B cell (primary cell): ENCODE measurements at regions of chr6 and their contacts with region 1.

Region 1: GRCh38 chr6:27753668-27754407 is 158.4 kb downstream of the OR2B2 start:
- DNase-seq: peak; percentile 82
- ATAC-seq: peak; percentile 48
- H3K4me3 ChIP-seq: peak overlapping the region; percentile 42 to 73 (median 63)
- H3K4me3 Mint-ChIP-seq: peak overlapping the region; percentile 91
- H3K27ac ChIP-seq: no peak overlapping the region
- H3K27ac Mint-ChIP-seq: peak overlapping the region; percentile 91
- H3K4me1 ChIP-seq: peaks cover 22 to 25% of the 10 kb centered on the region in 2 donors
- H3K4me1 Mint-ChIP-seq: peaks cover 30% of the 10 kb centered on the region
- H3K27me3 ChIP-seq: peaks cover 0 to 26% (median 5%) of the 10 kb centered on the region in 4 experiments
- H3K27me3 Mint-ChIP-seq: peaks cover 6% of the 10 kb centered on the region
- CTCF ChIP-seq: no peak

Region 2: GRCh38 chr6:27312146-27312949 is 441.5 kb before region 1 on chr6 and contains the start of gene POM121L2:
- CTCF ChIA-PET with region 1: interaction called, 4 read pairs
- POLR2A ChIA-PET with region 1: no interaction called
- intact Hi-C with region 1: loop called (anchors 2 kb)
- DNase-seq: peak; percentile 82
- ATAC-seq: peak; percentile 60
- H3K4me3 ChIP-seq: peak within 1 kb of the TSS; percentile 5 to 69 (median 62)
- H3K4me3 Mint-ChIP-seq: peak within 1 kb of the TSS; percentile 88
- H3K27ac ChIP-seq: no peak within 1 kb of the TSS
- H3K27ac Mint-ChIP-seq: no peak within 1 kb of the TSS
- H3K4me1 ChIP-seq: peaks cover 12 to 13% of the 10 kb centered on the region in 2 donors
- H3K4me1 Mint-ChIP-seq: peaks cover 13% of the 10 kb centered on the region
- H3K27me3 ChIP-seq: peaks cover 0 to 56% (median 38%) of the 10 kb centered on the region in 4 experiments
- H3K27me3 Mint-ChIP-seq: peaks cover 70% of the 10 kb centered on the region
- CTCF ChIP-seq: peak; percentile 82
- total RNA-seq, gene POM121L2: not detected in 2 replicates

Region 3: DNA sequence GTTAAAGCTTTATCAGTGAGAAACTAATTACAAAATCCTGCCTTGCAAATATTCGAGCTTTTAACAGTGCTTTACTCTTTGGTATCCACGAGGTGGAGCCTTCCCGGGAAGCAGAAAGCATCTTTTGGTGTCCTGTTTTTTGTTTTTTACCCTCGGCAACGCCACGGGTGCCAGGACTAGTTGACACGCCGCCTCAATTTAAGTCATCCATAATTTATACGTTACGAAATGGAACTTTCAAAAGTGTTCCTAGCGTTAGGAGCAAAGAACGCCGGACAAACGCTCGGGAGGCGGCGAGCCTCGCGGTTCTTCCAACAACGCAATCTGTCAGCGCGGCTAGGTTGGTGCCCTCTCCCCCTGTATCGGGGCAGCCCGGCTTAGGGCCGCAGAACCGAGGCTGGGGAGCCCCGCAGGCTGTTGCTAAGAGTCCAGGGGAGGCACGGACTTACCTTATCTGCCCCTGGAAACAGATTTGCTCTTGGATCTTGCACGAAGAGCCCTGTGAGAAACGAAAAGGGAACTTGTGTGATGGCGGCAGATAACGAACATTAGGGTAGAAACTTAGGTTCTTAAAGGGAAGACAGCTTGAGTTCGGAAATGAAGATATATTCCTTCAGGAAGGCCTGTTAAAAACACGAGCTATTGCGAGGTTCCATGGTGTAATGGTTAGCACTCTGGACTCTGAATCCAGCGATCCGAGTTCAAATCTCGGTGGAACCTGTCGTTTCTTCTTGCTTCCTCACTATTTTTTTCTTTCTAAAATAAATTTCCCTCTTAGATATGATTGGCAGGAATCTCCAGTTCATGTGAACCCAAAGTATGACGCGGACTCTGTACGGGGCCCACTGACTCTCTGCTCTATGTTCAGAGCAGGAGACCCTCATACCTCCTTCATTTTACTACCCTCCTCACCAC is 234.7 kb before region 1 on chr6:
- CTCF ChIA-PET with region 1: interaction called, 28 read pairs
- POLR2A ChIA-PET with region 1: interaction called, 4 read pairs
- intact Hi-C with region 1: loop called (anchors 1 kb)
- DNase-seq: peak; percentile 87
- ATAC-seq: peak; percentile 67
- H3K4me3 ChIP-seq: peak overlapping the region; percentile 67 to 89 (median 76)
- H3K4me3 Mint-ChIP-seq: peak overlapping the region; percentile 85
- H3K27ac ChIP-seq: peak overlapping the region; percentile 52 to 69
- H3K27ac Mint-ChIP-seq: peak overlapping the region; percentile 70
- H3K4me1 ChIP-seq: peaks cover 8 to 19% of the 10 kb centered on the region in 2 donors
- H3K4me1 Mint-ChIP-seq: peaks cover 15% of the 10 kb centered on the region
- H3K27me3 ChIP-seq: peaks cover 0 to 18% (median 10%) of the 10 kb centered on the region in 4 experiments
- H3K27me3 Mint-ChIP-seq: peaks cover 22% of the 10 kb centered on the region
- CTCF ChIP-seq: peak; percentile 80

Region 4: DNA sequence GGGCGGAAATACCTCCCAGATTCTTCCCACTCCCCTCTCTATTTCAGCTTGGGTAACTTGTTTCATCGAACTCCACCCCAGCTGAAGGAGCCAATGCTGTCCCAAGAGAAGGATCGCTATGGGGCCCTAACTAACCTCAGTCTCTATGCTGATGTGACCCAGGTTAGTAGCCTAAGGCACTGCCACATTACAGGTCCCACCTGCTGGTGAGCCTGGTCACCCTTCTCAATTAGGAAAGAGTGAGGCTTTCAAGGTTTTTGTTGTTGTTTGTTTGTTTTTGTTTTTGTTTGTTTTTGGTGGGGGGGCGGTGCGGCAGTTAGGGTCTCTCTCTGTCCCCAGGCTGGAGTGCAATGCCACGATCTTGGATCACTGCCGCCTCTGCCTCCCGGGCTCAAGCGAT is 10.0 kb before region 1 on chr6:
- CTCF ChIA-PET with region 1: interaction called, 10 read pairs
- POLR2A ChIA-PET with region 1: interaction called, 4 read pairs
- intact Hi-C with region 1: no loop called
- DNase-seq: no peak
- ATAC-seq: no peak
- H3K4me3 ChIP-seq: no peak overlapping the region
- H3K4me3 Mint-ChIP-seq: no peak overlapping the region
- H3K27ac ChIP-seq: no peak overlapping the region
- H3K27ac Mint-ChIP-seq: no peak overlapping the region
- H3K4me1 ChIP-seq: peaks cover 0 to 2% of the 10 kb centered on the region in 2 donors
- H3K4me1 Mint-ChIP-seq: no peaks in the 10 kb centered on the region
- H3K27me3 ChIP-seq: peaks cover 0 to 27% (median 8%) of the 10 kb centered on the region in 4 experiments
- H3K27me3 Mint-ChIP-seq: peaks cover 28% of the 10 kb centered on the region
- CTCF ChIP-seq: no peak

Region 5: DNA sequence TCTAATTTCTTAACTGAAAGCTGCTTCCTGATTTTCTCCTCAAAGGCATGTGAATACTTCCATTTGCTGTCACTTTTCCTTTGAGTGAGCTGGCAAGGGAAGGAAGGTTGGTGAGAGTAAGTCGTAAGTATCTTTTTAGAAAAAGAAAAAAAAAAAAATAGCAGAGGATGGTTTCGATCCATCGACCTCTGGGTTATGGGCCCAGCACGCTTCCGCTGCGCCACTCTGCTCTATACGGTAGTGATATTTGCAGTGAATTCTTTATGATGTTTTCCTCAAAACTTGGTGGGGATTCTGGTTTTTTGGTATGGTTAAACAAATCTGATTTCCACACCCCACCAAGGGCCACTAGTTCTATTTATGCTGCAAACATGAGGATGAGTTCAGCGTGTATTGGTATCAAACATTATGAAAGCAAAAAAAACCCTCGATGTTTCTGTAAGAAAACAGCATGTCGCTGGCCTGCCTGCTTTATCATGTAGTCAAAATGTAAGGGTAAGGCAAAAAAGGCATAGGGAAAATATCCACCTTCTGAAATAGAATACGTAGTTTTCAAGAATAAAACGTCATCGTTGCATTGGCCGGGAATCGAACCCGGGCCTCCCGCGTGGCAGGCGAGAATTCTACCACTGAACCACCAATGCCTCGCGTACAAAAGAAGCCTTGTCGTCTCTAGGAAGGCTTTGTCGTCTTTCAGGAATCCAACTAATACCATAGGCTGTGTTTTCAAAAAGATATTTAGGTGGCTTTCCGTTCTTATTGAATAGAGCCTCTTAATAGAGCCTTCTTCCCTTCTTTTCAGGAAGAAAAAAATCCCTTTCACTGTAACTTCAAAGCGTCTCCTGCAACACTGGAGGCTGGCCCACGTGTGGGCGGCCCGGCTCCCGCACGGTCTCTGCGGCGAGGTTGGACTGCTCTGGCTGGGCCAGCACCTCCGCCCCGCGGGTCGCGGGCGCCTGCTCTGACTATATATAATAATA is 148.8 kb after region 1 on chr6:
- CTCF ChIA-PET with region 1: interaction called, 3 read pairs
- POLR2A ChIA-PET with region 1: interaction called, 4 read pairs
- intact Hi-C with region 1: loop called (anchors 1 kb)
- DNase-seq: peak; percentile 94
- ATAC-seq: peak; percentile 84
- H3K4me3 ChIP-seq: peak overlapping the region; percentile 56 to 91 (median 70)
- H3K4me3 Mint-ChIP-seq: peak overlapping the region; percentile 94
- H3K27ac ChIP-seq: peak overlapping the region; percentile 78 to 95
- H3K27ac Mint-ChIP-seq: peak overlapping the region; percentile 99
- H3K4me1 ChIP-seq: peaks cover 0 to 8% of the 10 kb centered on the region in 2 donors
- H3K4me1 Mint-ChIP-seq: peaks cover 7% of the 10 kb centered on the region
- H3K27me3 ChIP-seq: no peaks in the 10 kb centered on the region
- H3K27me3 Mint-ChIP-seq: peaks cover 7% of the 10 kb centered on the region
- CTCF ChIP-seq: no peak